ENCODE measurements at regions of chr15 and their contacts with region 1.

Region 1: GRCh38 chr15:76345880-76346668 is 9.5 kb downstream of the ISL2 start:
- DNase-seq: peak; percentile 50
- ATAC-seq: peak; percentile 58
- H3K4me3 ChIP-seq: peak overlapping the region; percentile 87
- H3K27ac ChIP-seq: peak overlapping the region; percentile 47
- H3K4me1 ChIP-seq: peaks cover 33% of the 10 kb centered on the region
- H3K27me3 ChIP-seq: no peaks in the 10 kb centered on the region
- CTCF ChIP-seq: no peak

Region 2: DNA sequence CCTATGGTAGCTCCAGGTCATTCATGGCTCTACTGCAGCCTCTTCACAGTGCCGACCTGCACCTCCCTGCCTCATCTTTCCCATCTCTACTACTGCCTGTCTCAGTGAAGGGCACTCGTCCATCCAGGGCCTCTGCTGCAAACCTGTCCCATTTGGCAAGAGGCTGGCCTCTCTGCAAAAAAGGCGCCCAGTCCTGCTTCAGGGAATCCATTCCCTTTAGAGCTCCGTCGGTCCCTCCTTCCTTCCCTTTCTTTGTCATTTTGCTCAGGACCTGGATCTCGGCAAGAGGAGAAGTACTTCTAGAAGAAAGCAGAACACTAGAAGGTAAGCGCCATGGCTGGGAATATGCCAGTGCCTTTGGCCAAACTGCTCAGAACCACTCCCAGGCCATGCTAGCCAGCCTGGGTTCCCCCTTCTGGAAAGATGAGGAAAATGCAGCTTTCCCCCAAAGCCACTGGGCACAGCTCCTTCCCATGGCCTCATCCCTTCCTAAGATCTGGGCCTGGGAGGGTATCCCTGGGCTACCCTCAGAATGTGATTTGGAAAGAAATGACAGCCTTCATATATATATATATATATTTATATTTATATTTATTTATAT is 15.9 kb before region 1 on chr15:
- CTCF ChIA-PET with region 1: no interaction called
- POLR2A ChIA-PET with region 1: no interaction called
- intact Hi-C with region 1: no loop called
- DNase-seq: peak; percentile 79
- ATAC-seq: peak; percentile 83
- H3K4me3 ChIP-seq: no peak overlapping the region
- H3K27ac ChIP-seq: no peak overlapping the region
- H3K4me1 ChIP-seq: peaks cover 18% of the 10 kb centered on the region
- H3K27me3 ChIP-seq: no peaks in the 10 kb centered on the region
- CTCF ChIP-seq: peak; percentile 56

Region 3: DNA sequence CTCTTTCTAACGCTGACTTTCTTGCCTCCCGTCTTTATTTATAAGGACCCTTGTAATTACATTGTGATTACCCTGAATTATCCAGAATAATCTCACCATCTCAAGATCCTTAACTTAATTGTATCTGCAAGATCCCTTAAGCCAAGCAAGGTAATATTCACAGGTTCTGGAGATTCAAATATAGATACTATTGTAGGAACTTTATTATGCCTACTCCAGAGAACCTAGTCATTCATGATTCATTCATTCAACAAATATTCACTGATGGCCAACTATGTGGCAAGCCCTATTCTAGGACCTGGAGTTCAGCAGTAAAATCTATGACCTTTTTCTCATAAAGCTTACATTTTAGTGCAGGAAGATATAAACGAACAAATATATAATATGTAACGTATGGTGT is 40.0 kb after region 1 on chr15:
- CTCF ChIA-PET with region 1: no interaction called
- POLR2A ChIA-PET with region 1: no interaction called
- intact Hi-C with region 1: loop called (anchors 5 kb)
- DNase-seq: peak; percentile 94
- ATAC-seq: peak; percentile 96
- H3K4me3 ChIP-seq: peak overlapping the region; percentile 29; the same call in 1 of the 2 replicates
- H3K27ac ChIP-seq: peak overlapping the region; percentile 96
- H3K4me1 ChIP-seq: peaks cover 51% of the 10 kb centered on the region
- H3K27me3 ChIP-seq: no peaks in the 10 kb centered on the region
- CTCF ChIP-seq: no peak

Region 4: DNA sequence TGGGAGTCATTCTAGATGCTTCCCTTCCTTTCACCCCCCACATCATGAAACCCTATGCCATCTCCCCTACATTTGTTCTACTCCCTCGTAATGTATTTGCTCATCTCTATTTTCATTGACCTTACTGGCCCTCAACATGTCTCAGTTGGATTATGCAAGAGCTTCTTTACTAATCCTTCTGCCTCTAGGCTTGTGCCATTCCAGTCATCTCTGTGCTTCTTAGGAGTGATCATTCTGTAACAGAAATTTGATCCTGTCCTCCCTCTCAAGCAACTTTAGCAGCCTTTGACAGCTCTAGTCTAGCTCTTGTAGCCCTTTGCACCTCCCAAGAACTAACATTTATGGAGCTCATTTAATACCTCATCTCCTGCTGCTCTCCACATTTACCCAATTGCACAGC is 55.2 kb after region 1 on chr15:
- CTCF ChIA-PET with region 1: no interaction called
- POLR2A ChIA-PET with region 1: no interaction called
- intact Hi-C with region 1: no loop called
- DNase-seq: peak; percentile 47
- ATAC-seq: no peak
- H3K4me3 ChIP-seq: no peak overlapping the region
- H3K27ac ChIP-seq: no peak overlapping the region
- H3K4me1 ChIP-seq: peaks cover 6% of the 10 kb centered on the region
- H3K27me3 ChIP-seq: no peaks in the 10 kb centered on the region
- CTCF ChIP-seq: no peak

Measured in PC-3 (cell line).